ENCODE measurements at regions of chr7 and their contacts with region 1.

Region 1: GRCh38 chr7:4883374-4884144 is at the start of gene RADIL:
- DNase-seq: peak; percentile 60 to 91 (median 78)
- ATAC-seq: peak; percentile 98
- H3K4me3 ChIP-seq: no peak within 1 kb of the TSS
- H3K4me3 Mint-ChIP-seq: peak within 1 kb of the TSS; percentile 76
- H3K27ac ChIP-seq: no peak within 1 kb of the TSS
- H3K27ac Mint-ChIP-seq: no peak within 1 kb of the TSS
- H3K4me1 ChIP-seq: peaks cover 15% of the 10 kb centered on the region
- H3K4me1 Mint-ChIP-seq: peaks cover 12% of the 10 kb centered on the region
- H3K27me3 ChIP-seq: peaks cover 22 to 28% of the 10 kb centered on the region in 2 experiments
- H3K27me3 Mint-ChIP-seq: peaks cover 66% of the 10 kb centered on the region
- CTCF ChIP-seq: peak; percentile 31
- total RNA-seq, gene RADIL: not detected

Region 2: GRCh38 chr7:4610768-4611467 is 272.6 kb before region 1 on chr7:
- CTCF ChIA-PET with region 1: no interaction called
- POLR2A ChIA-PET with region 1: no interaction called
- intact Hi-C with region 1: loop called in 1 of 2 experiments (anchors 10 kb)
- DNase-seq: peak; percentile 23 to 84 (median 40)
- ATAC-seq: peak; percentile 91
- H3K4me3 ChIP-seq: no peak overlapping the region
- H3K4me3 Mint-ChIP-seq: no peak overlapping the region
- H3K27ac ChIP-seq: no peak overlapping the region
- H3K27ac Mint-ChIP-seq: no peak overlapping the region
- H3K4me1 ChIP-seq: peaks cover 12% of the 10 kb centered on the region
- H3K4me1 Mint-ChIP-seq: peaks cover 20% of the 10 kb centered on the region
- H3K27me3 ChIP-seq: no peaks in the 10 kb centered on the region
- H3K27me3 Mint-ChIP-seq: peaks cover 4% of the 10 kb centered on the region
- CTCF ChIP-seq: peak; percentile 84

Measured in CD4-positive, alpha-beta T cell (primary cell).